Caco-2 (cell line): ENCODE measurements at regions of chr1 and their contacts with region 1.

Region 1: DNA sequence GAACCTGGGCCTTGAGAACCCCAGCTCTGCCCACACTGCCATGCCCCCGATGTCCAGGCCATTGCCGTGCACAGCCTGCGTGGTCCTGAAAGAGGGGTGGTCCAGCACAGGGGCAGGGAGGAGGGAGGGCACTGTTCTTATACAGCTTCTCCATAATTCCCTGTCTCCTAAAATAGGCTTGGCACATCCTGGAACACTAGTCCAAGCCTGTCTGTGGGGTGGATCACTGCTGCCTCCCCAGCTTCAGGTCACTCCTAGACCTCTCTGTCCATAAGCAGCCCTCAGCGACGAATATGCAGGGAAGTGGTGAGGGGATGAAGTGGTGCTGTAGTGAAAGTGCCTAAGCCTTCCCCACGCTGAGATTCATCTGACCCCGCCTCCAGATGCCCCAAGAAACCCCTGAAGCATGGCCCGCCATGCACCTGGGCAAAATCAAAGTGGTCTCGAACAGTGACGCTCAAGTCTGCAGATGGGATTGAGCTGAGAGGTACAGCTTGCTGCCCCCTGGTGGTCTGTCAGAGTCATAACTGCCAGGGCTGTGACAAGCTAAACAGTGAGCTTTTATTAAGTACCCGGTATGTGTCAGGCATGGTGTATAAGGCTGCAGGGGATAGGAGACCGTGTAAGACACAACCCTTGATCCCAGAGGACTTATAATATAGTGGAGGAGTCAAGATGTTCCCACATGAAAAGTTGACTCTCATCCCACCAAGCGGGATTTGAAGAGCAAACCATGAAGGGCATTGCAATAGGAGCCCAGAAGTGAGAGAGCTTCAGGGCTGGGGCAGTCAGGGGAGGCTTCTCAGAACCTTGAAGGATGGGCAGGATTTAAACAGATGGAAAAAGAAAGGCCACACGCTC is 66.6 kb downstream of the FAM163A start:
- DNase-seq: peak; percentile 70 to 71
- H3K4me3 ChIP-seq: no peak overlapping the region
- H3K4me3 Mint-ChIP-seq: no peak overlapping the region
- H3K27ac Mint-ChIP-seq: no peak overlapping the region
- H3K4me1 ChIP-seq: peaks cover 34% of the 10 kb centered on the region
- H3K4me1 Mint-ChIP-seq: peaks cover 12% of the 10 kb centered on the region
- H3K27me3 ChIP-seq: no peaks in the 10 kb centered on the region
- H3K27me3 Mint-ChIP-seq: peaks cover 14% of the 10 kb centered on the region
- CTCF ChIP-seq: peak; percentile 85 to 88

Region 2: DNA sequence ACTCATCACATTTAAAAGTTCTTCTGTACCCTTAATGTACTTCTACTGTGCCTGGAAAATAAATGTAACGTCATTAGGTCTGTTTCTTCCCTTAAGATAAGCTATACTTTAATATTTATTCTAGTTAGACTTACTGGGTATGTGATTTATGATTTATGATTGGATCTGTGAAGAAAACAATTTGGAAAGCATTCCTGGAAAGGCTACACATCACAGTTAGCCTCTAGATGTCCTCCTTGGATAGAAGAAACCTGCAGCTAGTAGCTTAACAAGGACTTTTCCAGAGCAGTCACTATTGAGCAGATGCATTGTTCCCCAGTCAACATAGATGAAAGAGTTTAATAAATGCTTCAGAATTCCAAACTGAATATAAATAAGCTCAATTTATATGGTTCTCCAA is 558.1 kb before region 1 on chr1:
- CTCF ChIA-PET with region 1: interaction called, 3 read pairs
- POLR2A ChIA-PET with region 1: no interaction called
- intact Hi-C with region 1: loop called (anchors 10 kb)
- DNase-seq: peak in 1 of 2 experiments; percentile 52
- H3K4me3 ChIP-seq: no peak overlapping the region
- H3K4me3 Mint-ChIP-seq: no peak overlapping the region
- H3K27ac Mint-ChIP-seq: no peak overlapping the region
- H3K4me1 ChIP-seq: no peaks in the 10 kb centered on the region
- H3K4me1 Mint-ChIP-seq: no peaks in the 10 kb centered on the region
- H3K27me3 ChIP-seq: no peaks in the 10 kb centered on the region
- H3K27me3 Mint-ChIP-seq: no peaks in the 10 kb centered on the region
- CTCF ChIP-seq: peak; percentile 61 to 65

Region 3: DNA sequence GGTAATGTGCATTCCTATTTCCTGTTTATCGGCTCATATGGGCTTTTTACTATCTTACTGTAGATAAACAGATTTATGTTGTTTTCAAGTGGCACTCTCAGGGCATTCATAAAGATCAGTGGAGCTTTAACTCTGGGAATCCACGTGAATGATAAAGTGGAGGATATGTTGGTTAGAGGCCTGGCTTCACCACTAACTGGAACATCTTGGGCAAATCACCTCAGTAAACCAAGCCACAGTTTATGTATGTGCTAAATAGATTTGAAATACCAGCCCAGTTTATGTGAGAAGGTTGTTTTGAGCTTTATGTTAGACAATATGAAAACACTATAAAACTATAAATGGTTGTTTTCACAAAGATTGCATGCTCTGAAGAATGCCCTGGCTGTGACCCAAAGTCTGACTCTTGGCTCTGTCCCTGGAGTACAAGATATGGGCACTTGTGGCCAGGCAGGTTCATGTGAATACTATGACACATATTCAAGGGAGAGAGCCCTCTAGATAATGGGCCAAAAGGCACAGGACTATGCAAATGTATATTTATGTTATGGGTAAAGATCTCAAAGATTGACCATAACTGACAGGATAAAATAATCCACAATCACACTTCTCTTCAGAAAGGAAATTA is 30.0 kb before region 1 on chr1:
- CTCF ChIA-PET with region 1: interaction called, 5 read pairs
- POLR2A ChIA-PET with region 1: no interaction called
- intact Hi-C with region 1: loop called (anchors 5 kb)
- DNase-seq: no peak
- H3K4me3 ChIP-seq: no peak overlapping the region
- H3K4me3 Mint-ChIP-seq: no peak overlapping the region
- H3K27ac Mint-ChIP-seq: no peak overlapping the region
- H3K4me1 ChIP-seq: no peaks in the 10 kb centered on the region
- H3K4me1 Mint-ChIP-seq: no peaks in the 10 kb centered on the region
- H3K27me3 ChIP-seq: no peaks in the 10 kb centered on the region
- H3K27me3 Mint-ChIP-seq: peaks cover 3% of the 10 kb centered on the region
- CTCF ChIP-seq: no peak

Region 4: GRCh38 chr1:179840107-179840506 is 30.4 kb after region 1 on chr1:
- CTCF ChIA-PET with region 1: interaction called, 14 read pairs
- POLR2A ChIA-PET with region 1: no interaction called
- intact Hi-C with region 1: no loop called
- DNase-seq: no peak
- H3K4me3 ChIP-seq: no peak overlapping the region
- H3K4me3 Mint-ChIP-seq: no peak overlapping the region
- H3K27ac Mint-ChIP-seq: no peak overlapping the region
- H3K4me1 ChIP-seq: peaks cover 10% of the 10 kb centered on the region
- H3K4me1 Mint-ChIP-seq: no peaks in the 10 kb centered on the region
- H3K27me3 ChIP-seq: no peaks in the 10 kb centered on the region
- H3K27me3 Mint-ChIP-seq: no peaks in the 10 kb centered on the region
- CTCF ChIP-seq: no peak

Region 5: GRCh38 chr1:180178511-180179161 is 368.9 kb after region 1 on chr1:
- CTCF ChIA-PET with region 1: interaction called, 14 read pairs
- POLR2A ChIA-PET with region 1: no interaction called
- intact Hi-C with region 1: loop called (anchors 2 kb)
- DNase-seq: peak; percentile 64 to 80
- H3K4me3 ChIP-seq: no peak overlapping the region
- H3K4me3 Mint-ChIP-seq: no peak overlapping the region
- H3K27ac Mint-ChIP-seq: no peak overlapping the region
- H3K4me1 ChIP-seq: no peaks in the 10 kb centered on the region
- H3K4me1 Mint-ChIP-seq: no peaks in the 10 kb centered on the region
- H3K27me3 ChIP-seq: no peaks in the 10 kb centered on the region
- H3K27me3 Mint-ChIP-seq: no peaks in the 10 kb centered on the region
- CTCF ChIP-seq: peak; percentile 92 to 98